MCF 10A (cell line): ENCODE measurements at regions of chr12 and their contacts with region 1.

Region 1: DNA sequence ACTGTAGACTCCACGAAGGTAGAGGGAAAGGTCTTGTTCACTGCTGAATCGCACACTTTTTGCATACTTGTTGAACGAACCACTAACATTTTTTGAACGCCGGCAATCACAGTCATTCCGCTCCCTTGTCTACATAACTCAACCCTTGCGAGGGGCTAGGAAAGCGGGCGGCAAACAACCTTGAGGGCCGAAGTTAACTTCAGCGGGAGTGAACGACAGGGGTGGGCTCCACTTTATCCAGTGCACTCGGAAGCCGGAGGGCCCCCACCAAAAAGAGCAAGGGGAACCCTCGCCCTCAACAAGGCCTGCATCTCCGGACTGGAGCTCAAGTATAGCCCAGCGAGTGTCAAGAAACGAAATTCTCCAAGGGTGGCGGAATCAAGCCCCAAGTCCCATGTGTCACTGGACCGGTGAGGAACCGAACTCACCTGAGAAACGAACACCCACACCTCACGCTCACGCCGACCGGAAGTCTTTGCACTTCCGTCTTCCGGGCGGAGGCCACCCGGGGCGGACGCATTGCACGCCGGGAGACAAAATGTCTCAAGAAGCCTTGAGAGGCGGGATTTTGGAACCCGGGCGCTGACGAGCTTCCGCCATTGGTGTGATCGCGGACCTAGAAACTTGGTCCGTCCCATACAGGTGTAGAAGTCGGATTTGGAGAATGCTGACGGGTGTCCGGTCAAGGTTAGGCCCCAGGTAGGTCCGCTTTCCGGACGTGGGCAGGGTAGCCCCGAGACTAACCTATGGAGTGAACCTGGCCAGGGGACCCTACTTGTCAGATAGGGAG is at the start of gene LLPH:
- DNase-seq: peak; percentile 93
- H3K4me3 Mint-ChIP-seq: peak within 1 kb of the TSS; percentile 90
- H3K27ac Mint-ChIP-seq: peak within 1 kb of the TSS; percentile 89
- H3K4me1 Mint-ChIP-seq: peaks cover 35% of the 10 kb centered on the region
- H3K27me3 Mint-ChIP-seq: no peaks in the 10 kb centered on the region
- CTCF ChIP-seq: no peak
- total RNA-seq, gene LLPH: 43.8 and 44.3 TPM in 2 replicates

Region 2: DNA sequence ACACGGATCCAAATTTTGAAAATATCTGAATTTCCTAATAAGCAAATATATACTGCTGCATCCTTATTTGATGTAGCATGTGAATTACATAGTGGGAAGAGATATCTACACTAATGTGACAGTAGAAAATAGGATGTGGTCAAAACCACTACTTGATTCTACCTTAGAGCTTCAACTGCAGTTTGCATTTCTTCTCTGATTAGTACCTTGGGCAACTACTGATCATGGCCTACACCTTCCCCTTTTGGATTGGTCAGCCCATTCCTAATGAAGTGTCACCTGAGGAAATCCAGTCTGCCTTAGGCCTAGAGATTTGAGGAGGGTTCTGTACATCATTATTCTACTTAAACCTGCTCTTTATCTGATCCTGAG is 10.6 kb before region 1 on chr12:
- CTCF ChIA-PET with region 1: interaction called, 3 read pairs
- POLR2A ChIA-PET with region 1: interaction called, 24 read pairs
- intact Hi-C with region 1: no loop called
- DNase-seq: no peak
- H3K4me3 Mint-ChIP-seq: no peak overlapping the region
- H3K27ac Mint-ChIP-seq: no peak overlapping the region
- H3K4me1 Mint-ChIP-seq: peaks cover under 1% of the 10 kb centered on the region
- H3K27me3 Mint-ChIP-seq: no peaks in the 10 kb centered on the region
- CTCF ChIP-seq: no peak

Region 3: GRCh38 chr12:66144791-66145754 is 14.6 kb after region 1 on chr12:
- CTCF ChIA-PET with region 1: interaction called, 6 read pairs
- POLR2A ChIA-PET with region 1: interaction called, 19 read pairs
- intact Hi-C with region 1: no loop called
- DNase-seq: peak; percentile 84
- H3K4me3 Mint-ChIP-seq: no peak overlapping the region
- H3K27ac Mint-ChIP-seq: peak overlapping the region; percentile 82
- H3K4me1 Mint-ChIP-seq: peaks cover 8% of the 10 kb centered on the region
- H3K27me3 Mint-ChIP-seq: no peaks in the 10 kb centered on the region
- CTCF ChIP-seq: peak; percentile 59

Region 4: DNA sequence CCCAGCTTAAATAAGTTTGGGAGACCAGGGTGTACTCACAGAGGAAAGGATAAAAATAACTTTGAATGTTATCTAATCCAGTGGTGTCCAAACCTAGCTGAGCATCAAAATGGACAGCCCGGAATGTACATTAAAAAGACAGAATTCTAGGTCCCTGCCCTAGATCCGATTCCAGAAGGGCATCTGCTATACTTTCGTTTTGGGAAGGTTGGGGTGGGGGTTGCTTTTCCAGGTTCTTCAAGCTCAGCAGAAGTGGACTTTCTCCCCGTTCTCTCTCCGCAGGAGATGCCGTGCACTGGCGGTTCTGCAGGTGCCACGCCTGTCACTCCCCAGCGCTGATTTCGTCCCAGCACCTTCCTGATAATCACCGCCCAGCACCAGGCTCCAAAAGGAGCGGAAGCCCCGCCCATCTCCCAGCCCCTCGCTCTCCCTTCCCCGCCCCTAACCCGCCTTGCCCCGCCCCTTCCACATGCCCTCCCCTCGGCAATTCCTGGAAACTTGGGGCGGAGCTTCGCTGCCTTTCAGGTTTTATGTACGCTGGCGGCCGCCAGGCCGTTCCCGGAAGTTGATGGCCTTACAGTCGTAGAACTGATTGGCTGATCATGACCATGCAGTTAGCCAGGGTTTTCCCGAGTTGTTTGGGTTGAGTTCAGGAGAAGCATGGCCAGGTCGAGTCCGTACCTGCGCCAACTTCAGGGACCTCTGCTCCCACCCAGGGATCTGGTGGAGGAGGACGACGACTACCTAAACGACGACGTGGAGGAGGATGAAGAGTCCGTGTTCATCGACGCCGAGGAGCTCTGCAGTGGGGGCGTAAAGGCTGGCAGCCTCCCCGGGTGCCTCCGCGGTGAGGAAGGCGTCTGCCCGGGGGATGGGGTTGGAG is 171.7 kb after region 1 on chr12 and contains the start of gene HELB:
- CTCF ChIA-PET with region 1: interaction called, 3 read pairs
- POLR2A ChIA-PET with region 1: interaction called, 18 read pairs
- intact Hi-C with region 1: no loop called
- DNase-seq: peak; percentile 98
- H3K4me3 Mint-ChIP-seq: peak within 1 kb of the TSS; percentile 99
- H3K27ac Mint-ChIP-seq: peak within 1 kb of the TSS; percentile 90
- H3K4me1 Mint-ChIP-seq: peaks cover 23% of the 10 kb centered on the region
- H3K27me3 Mint-ChIP-seq: peaks cover 45% of the 10 kb centered on the region
- CTCF ChIP-seq: no peak
- total RNA-seq, gene HELB: 2.6 TPM in 2 replicates